Panc1 (cell line): ENCODE measurements at regions of chr11 and their contacts with region 1.

Region 1: GRCh38 chr11:126891556-126892217 is 108.9 kb downstream of the KIRREL3 start:
- DNase-seq: no peak
- ATAC-seq: no peak
- H3K4me3 ChIP-seq: no peak overlapping the region
- H3K27ac ChIP-seq: no peak overlapping the region
- H3K4me1 ChIP-seq: no peaks in the 10 kb centered on the region
- H3K27me3 ChIP-seq: no peaks in the 10 kb centered on the region
- CTCF ChIP-seq: no peak

Region 2: GRCh38 chr11:126878913-126879482 is 12.7 kb before region 1 on chr11:
- CTCF ChIA-PET with region 1: no interaction called
- POLR2A ChIA-PET with region 1: interaction called, 12 read pairs
- in situ Hi-C with region 1: no loop called
- intact Hi-C with region 1: no loop called
- DNase-seq: no peak
- ATAC-seq: no peak
- H3K4me3 ChIP-seq: no peak overlapping the region
- H3K27ac ChIP-seq: no peak overlapping the region
- H3K4me1 ChIP-seq: no peaks in the 10 kb centered on the region
- H3K27me3 ChIP-seq: peaks cover 10% of the 10 kb centered on the region
- CTCF ChIP-seq: no peak

Region 3: GRCh38 chr11:126949066-126949891 is 57.6 kb after region 1 on chr11:
- CTCF ChIA-PET with region 1: no interaction called
- POLR2A ChIA-PET with region 1: no interaction called
- in situ Hi-C with region 1: no loop called
- intact Hi-C with region 1: no loop called
- DNase-seq: no peak
- ATAC-seq: no peak
- H3K4me3 ChIP-seq: no peak overlapping the region
- H3K27ac ChIP-seq: no peak overlapping the region
- H3K4me1 ChIP-seq: no peaks in the 10 kb centered on the region
- H3K27me3 ChIP-seq: no peaks in the 10 kb centered on the region
- CTCF ChIP-seq: no peak